IMR-90 (cell line): ENCODE measurements at regions of chrX and their contacts with region 1.

Region 1: GRCh38 chrX:3713225-3713936 is at the start of gene PRKX:
- DNase-seq: peak; percentile 36
- ATAC-seq: peak; percentile 94
- H3K4me3 ChIP-seq: peak within 1 kb of the TSS; percentile 90
- H3K27ac ChIP-seq: peak within 1 kb of the TSS; percentile 67
- H3K4me1 ChIP-seq: no peaks in the 10 kb centered on the region
- H3K27me3 ChIP-seq: no peaks in the 10 kb centered on the region
- CTCF ChIP-seq: no peak
- POLR2A ChIP-seq: no peak
- RAD21 ChIP-seq: no peak
- total RNA-seq, gene PRKX: 13.1 and 14.9 TPM in 2 replicates

Region 2: GRCh38 chrX:3609810-3610209 is 103.6 kb before region 1 on chrX:
- CTCF ChIA-PET with region 1: no interaction called
- POLR2A ChIA-PET with region 1: no interaction called
- dilution Hi-C with region 1: no loop called
- in situ Hi-C with region 1: no loop called
- intact Hi-C with region 1: no loop called
- DNase-seq: peak; percentile 88
- ATAC-seq: peak; percentile 98
- H3K4me3 ChIP-seq: no peak overlapping the region
- H3K27ac ChIP-seq: peak overlapping the region; percentile 57; the same call in 1 of the 2 replicates
- H3K4me1 ChIP-seq: peaks cover 2% of the 10 kb centered on the region; the same call in 1 of the 2 replicates
- H3K27me3 ChIP-seq: no peaks in the 10 kb centered on the region
- CTCF ChIP-seq: no peak
- POLR2A ChIP-seq: no peak
- RAD21 ChIP-seq: no peak

Region 3: GRCh38 chrX:3728454-3728853 is 15.1 kb after region 1 on chrX:
- CTCF ChIA-PET with region 1: no interaction called
- POLR2A ChIA-PET with region 1: interaction called, 10 read pairs
- dilution Hi-C with region 1: no loop called
- in situ Hi-C with region 1: no loop called
- intact Hi-C with region 1: no loop called
- DNase-seq: peak; percentile 85
- ATAC-seq: peak; percentile 93
- H3K4me3 ChIP-seq: no peak overlapping the region
- H3K27ac ChIP-seq: peak overlapping the region; percentile 80; the same call in 1 of the 2 replicates
- H3K4me1 ChIP-seq: 0 out of 2 replicates have a peak, but pooled peaks cover 3% of the 10 kb centered on the region
- H3K27me3 ChIP-seq: no peaks in the 10 kb centered on the region
- CTCF ChIP-seq: no peak
- POLR2A ChIP-seq: no peak
- RAD21 ChIP-seq: no peak

Region 4: DNA sequence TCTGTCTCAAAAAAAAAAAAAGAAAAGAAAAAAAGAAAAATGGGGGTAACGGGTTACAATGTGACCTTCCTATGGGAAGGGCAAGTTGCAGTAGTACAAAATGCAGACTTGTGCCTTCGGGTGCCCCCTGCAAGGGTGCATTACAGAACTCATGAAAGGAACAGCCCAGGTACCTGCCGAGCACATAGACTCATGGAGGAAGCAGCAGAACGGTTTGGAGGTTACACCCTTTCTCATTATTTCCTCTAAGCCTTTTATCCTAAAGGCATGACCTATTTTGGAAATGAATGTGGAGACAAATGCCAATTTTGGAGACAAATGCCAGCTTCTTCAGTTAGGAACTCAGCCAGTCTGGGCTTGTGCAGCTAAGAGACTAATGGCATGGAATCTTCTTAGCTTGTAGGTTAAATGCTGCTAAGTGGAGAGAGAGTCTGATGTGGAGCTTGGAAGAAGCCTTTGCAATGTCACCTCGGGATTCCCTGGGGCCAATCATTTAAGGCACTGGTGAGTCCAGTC is 44.2 kb after region 1 on chrX:
- CTCF ChIA-PET with region 1: no interaction called
- POLR2A ChIA-PET with region 1: no interaction called
- dilution Hi-C with region 1: no loop called
- in situ Hi-C with region 1: no loop called
- intact Hi-C with region 1: no loop called
- DNase-seq: no peak
- ATAC-seq: no peak
- H3K4me3 ChIP-seq: no peak overlapping the region
- H3K27ac ChIP-seq: no peak overlapping the region
- H3K4me1 ChIP-seq: no peaks in the 10 kb centered on the region
- H3K27me3 ChIP-seq: no peaks in the 10 kb centered on the region
- CTCF ChIP-seq: no peak
- POLR2A ChIP-seq: no peak
- RAD21 ChIP-seq: no peak